ENCODE measurements at regions of chr5 and their contacts with region 1.

Region 1: GRCh38 chr5:39080597-39081204 is 6.5 kb upstream of the RICTOR start:
- DNase-seq: no peak
- H3K4me3 ChIP-seq: no peak overlapping the region
- CTCF ChIP-seq: peak; percentile 62

Region 2: DNA sequence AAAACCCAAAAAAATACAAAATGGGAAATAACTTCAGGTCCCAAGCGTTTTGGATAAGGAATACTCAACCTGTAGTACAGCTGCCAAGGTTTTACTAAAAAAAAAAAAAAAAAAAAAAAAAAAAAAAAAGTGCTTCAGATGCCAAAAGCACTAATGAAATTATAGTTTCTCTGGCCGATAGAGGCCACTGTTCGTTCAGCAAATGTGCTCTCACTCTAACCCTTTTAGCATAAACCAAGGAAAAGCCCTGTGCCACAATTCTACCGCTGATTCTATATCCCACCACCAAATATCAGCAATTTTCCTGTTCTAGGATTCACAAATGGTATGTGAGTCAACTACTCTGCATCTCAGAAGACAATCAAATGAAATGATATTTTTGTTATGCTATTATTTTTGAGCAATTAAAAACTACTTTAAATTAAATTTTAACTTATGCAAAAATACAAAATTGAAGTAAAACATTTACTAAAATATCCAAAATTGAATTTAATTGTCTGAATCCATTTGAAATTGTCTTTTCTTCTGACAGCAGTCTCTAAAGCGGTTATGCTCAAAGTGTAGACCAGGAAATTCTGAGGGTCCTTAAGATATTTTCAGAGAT is 86.3 kb before region 1 on chr5:
- CTCF ChIA-PET with region 1: interaction called, 13 read pairs
- POLR2A ChIA-PET with region 1: no interaction called
- DNase-seq: no peak
- H3K4me3 ChIP-seq: no peak overlapping the region
- CTCF ChIP-seq: peak; percentile 33

Region 3: DNA sequence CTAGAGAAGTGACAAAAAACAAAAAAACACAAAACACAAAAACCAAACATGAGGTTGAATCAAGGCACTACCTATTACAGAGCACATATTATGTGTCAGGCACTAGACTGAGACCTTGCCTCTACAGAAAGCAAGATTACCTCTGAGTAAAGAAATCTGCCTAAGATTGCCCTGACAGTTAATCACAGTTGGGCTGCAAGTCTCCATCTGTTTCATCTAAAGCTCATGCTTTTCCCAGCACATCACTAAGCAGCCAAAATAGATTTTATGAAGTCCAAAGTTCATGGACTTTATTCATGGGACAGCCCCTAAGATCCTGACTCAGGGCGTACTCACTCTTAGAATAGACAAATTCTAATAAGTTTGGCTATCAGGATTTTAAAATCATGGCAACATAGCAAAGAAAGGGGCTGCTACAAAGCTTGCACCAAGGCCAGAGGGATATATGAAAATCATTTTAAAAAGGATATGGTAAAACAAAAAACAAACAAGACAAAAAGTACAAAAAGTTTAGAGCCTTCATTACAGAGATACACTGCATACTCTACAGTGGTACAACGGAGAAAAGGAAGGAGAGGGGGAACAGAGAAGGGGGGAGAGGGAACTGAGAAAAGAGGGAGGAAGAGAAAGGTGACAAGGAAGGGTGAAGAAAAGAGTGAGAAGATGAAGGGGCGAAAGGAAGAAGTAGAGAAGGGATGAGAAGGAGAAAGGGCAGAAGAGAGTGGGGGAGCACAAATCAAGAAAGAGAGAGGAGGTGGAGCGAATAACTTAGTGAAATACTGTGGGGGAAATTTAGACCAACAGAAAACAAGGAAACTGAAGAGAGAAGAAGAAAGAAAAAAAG is 64.7 kb before region 1 on chr5:
- CTCF ChIA-PET with region 1: interaction called, 12 read pairs
- POLR2A ChIA-PET with region 1: no interaction called
- DNase-seq: peak; percentile 67
- H3K4me3 ChIP-seq: no peak overlapping the region
- CTCF ChIP-seq: no peak

Region 4: GRCh38 chr5:39092581-39093350 is 12.1 kb after region 1 on chr5:
- CTCF ChIA-PET with region 1: interaction called, 61 read pairs
- POLR2A ChIA-PET with region 1: no interaction called
- DNase-seq: no peak
- H3K4me3 ChIP-seq: no peak overlapping the region
- CTCF ChIP-seq: no peak

Region 5: GRCh38 chr5:39319395-39319794 is 238.7 kb after region 1 on chr5:
- CTCF ChIA-PET with region 1: no interaction called
- POLR2A ChIA-PET with region 1: no interaction called
- DNase-seq: no peak
- H3K4me3 ChIP-seq: no peak overlapping the region
- CTCF ChIP-seq: no peak

Region 6: DNA sequence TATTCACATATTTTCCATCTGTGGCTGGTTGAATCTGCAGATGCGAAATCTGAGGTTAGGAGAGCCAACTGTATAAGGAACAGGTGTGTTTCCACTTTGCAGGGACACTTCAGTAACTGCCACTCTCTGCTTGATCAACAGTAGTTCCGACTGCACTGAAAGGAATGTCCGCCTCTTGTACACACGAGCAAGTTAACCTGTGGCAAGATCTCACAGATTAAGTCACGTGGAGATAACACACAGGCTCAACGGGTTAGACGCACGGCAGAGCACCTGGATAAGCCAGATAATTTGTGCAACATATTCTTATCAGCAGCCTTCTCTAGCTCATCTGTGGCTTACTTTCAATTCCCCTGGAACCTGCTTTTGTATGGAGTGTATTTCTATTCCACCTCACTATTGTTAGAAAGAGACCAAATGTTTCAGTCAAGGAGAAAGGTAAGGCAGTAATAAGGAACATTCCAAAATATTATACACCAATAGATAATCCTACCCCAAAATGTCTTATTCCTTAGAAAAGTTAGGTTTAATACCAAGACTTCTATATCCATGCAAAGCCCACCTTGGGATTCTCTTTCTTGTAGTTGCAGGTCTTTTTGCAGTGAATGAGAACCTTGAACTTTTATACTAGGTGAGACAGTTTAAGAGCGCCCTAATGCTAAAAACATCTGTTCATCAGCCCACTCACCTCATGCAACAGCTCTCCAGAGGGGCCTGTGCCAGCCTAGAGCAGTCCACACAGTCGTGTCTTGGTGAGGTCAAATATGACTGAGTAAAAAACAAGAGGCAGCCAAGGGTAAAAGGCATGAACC is 290.1 kb after region 1 on chr5:
- CTCF ChIA-PET with region 1: no interaction called
- POLR2A ChIA-PET with region 1: no interaction called
- DNase-seq: no peak
- H3K4me3 ChIP-seq: no peak overlapping the region
- CTCF ChIP-seq: no peak